Endothelial cell of umbilical vein (primary cell): ENCODE measurements at regions of chr1 and their contacts with region 1.

Region 1: DNA sequence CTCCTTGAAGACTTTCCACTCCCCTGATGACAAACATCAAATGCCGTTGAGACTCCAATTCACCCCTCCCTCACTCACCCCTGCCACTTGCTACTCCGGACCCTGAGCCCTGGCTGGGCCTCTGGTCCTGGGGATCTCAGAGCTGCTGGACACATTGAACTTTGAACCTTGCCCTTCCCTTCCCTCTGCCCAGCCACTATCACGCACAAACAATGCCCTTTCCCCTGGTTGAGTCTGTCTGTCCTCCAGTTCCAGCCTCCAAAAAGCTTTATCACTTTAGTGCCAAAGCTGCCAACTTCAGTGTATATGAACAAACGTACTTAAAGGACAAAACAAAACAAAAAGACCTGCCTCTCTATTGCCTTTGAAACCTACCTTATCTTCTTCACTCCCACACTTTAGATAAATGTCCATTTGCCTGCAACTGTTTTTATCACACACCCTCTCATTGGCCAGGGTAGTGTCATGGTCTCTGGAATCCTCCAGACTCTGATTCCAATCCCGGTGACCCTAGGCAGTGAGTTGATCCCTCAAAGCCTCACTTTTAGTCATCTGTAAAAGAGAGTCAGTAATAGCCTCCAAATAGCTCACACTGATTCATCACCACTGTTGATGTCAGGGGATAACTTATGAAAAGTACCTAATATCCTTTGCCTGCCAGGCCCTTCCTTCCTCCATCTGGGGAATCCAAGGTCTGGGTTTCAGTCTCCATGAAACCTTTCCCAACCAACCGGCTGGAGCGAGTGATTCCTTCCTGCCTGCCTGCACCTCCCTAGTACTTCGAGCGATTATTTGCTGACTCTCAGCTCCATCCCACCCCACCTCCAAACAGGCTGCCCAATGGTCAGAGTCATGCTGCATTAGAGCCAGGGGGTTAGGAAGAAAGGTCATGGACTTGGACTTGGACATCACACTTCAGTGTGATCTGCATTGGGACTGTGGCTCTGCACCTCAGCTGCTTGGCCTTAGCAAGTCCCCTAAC is 15.9 kb upstream of the SPOCD1 start:
- DNase-seq: no peak
- H3K4me3 ChIP-seq: no peak overlapping the region
- H3K27ac ChIP-seq: no peak overlapping the region
- H3K4me1 ChIP-seq: no peaks in the 10 kb centered on the region
- H3K27me3 ChIP-seq: peaks cover 3 to 6% of the 10 kb centered on the region in 2 experiments
- CTCF ChIP-seq: no peak
- POLR2A ChIP-seq: no peak

Region 2: GRCh38 chr1:31815752-31816500 is 15.8 kb before region 1 on chr1 and contains the start of gene SPOCD1:
- CTCF ChIA-PET with region 1: interaction called, 10 read pairs
- POLR2A ChIA-PET with region 1: no interaction called
- dilution Hi-C with region 1: no loop called
- intact Hi-C with region 1: no loop called
- DNase-seq: peak; percentile 78
- H3K4me3 ChIP-seq: peak within 1 kb of the TSS in 1 of 3 experiments; percentile 1
- H3K27ac ChIP-seq: no peak within 1 kb of the TSS
- H3K4me1 ChIP-seq: peaks cover 3% of the 10 kb centered on the region
- H3K27me3 ChIP-seq: no peaks in the 10 kb centered on the region
- CTCF ChIP-seq: peak; percentile 87 to 95
- POLR2A ChIP-seq: no peak
- total RNA-seq, gene SPOCD1: 0.27 and 24.9 TPM in 2 replicates

Region 3: GRCh38 chr1:31855038-31855845 is 23.6 kb after region 1 on chr1:
- CTCF ChIA-PET with region 1: no interaction called
- POLR2A ChIA-PET with region 1: no interaction called
- dilution Hi-C with region 1: no loop called
- intact Hi-C with region 1: no loop called
- DNase-seq: no peak
- H3K4me3 ChIP-seq: no peak overlapping the region
- H3K27ac ChIP-seq: no peak overlapping the region
- H3K4me1 ChIP-seq: no peaks in the 10 kb centered on the region
- H3K27me3 ChIP-seq: no peaks in the 10 kb centered on the region
- CTCF ChIP-seq: no peak
- POLR2A ChIP-seq: no peak